ENCODE measurements at regions of chr1 and their contacts with region 1.

Region 1: GRCh38 chr1:78607334-78607927 is 12.8 kb upstream of the IFI44L start:
- DNase-seq: no peak
- ATAC-seq: peak; percentile 74

Region 2: DNA sequence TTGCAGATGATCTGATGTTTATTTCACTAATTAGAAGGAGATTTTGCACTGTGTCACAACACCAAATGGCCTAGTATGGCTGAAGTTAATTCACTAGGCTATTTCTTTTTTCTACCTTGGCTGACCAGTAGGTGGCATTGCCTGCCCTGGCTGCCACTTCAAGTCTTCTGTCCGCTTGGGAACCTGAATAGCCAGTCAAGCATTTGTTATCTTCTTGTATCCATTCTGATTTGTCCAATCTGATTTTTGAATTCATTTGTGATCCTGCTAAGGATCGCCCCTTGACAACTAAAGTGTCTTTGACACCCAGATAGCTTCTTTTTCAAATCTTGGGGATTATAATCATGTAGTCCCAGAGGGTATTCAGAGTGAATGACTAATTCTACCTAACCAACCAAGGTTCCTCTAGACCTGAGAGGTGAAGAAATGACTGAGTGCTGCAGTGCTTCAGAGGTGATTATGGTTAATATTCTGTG is 462.3 kb before region 1 on chr1:
- intact Hi-C with region 1: loop called (anchors 10 kb)
- DNase-seq: peak; percentile 64
- ATAC-seq: peak; percentile 92

Measured in sciatic nerve (tissue), 2 donors.